Cardiac septum (tissue), 1 donor: ENCODE measurements at regions of chr4 and their contacts with region 1.

Region 1: GRCh38 chr4:78612398-78613178 is 61.0 kb downstream of the ANXA3 start:
- DNase-seq: no peak

Region 2: DNA sequence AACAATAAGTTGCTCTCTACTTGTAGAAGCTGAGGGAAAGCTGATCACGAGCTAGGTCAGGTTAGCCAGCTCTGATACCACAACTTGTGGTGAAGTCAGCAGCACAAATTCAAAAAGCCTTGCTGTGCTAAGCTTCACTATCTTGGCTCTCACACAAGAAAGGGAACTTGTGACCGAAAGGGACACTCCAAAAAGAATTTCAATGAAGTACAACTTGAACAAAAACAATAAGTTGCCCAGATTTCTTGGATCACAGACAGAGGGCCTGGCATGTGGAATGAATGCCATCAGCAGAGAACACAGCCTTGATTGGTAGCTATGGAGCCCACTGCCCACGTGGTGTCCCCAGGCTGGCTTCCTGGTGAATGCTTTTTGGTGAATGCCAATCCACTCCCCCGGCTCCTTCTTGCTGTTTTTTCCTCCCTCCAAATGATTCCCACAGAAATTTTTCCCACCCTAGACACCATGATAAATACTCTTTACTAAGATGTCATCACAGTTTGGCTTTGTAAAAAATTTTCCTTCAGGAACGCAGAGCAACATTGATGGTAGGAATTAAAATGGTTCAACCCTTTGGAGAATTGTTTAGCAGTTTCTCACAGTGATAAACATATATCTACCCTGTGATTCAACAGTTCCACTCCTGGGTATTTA is 21.6 kb after region 1 on chr4:
- intact Hi-C with region 1: loop called (anchors 2 kb)
- DNase-seq: no peak

Region 3: DNA sequence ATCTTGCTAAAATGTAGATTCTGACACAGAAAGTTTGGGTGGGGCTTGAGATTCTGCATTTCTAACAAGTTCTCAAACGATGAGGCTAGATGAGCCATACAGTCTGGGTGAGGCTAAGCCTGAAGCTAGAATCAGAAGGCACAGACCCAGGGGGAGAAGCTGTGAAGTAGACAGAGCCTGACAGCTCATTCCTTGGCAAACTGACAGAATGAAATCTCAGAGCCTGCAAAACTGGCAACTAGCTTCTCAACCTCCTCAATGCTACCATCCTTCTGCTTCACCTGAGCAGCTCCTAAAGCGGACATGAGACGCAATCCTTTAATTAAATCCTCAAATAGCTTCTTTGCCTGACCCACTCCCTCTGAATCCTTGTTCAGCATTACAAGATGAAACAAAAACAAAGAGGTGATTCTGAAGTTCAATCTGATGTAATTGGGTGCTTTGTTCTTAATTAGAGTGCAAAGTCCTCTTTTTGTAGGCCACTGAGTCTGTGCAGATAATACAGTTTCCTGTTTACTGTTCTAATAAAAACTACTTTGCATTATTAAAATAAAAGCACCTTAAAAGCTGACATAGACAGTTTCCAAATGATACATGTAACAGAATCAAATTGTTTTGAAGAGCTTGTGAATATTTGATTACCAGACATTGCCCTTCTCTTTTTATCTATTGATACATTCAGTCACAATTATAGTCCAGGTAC is 92.5 kb after region 1 on chr4:
- intact Hi-C with region 1: no loop called
- DNase-seq: no peak

Region 4: DNA sequence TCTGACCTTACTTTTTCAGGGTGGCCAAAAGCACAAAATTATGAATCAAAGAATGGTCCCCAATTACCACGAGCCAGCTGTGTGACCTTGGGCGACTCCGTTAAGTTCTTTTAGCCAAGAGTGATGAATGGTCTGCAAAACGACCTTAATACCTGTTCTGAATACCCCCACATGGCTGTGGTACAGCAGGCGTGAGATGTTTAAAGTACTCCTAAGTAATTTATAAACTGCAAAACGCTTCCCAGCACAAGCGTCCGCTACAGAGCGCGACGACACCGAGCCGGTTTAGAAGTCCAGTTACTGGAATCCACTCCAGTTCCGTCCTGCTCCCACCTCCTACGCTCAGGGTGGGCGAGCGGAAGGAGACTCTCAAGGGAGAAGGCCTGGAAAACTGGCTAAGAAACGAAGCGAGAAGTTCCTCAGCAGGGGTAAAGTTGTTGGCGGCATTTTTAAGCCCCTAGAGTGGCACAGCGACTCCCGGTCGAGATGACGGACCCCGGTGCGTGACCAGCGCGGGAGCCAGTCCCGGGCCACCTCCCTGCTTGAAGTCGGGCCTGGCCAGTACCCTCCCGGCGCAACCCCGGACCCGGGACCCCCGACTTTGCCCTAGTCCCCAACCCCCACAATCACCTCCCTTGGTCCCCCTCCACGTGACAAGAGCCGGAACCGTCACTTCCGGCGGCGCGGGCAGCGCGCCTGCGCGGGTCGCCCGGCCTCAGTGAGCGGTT is 162.9 kb after region 1 on chr4:
- intact Hi-C with region 1: loop called (anchors 5 kb)
- DNase-seq: peak; percentile 94

Region 5: GRCh38 chr4:78864405-78865024 is 251.9 kb after region 1 on chr4:
- intact Hi-C with region 1: loop called (anchors 1 kb)
- DNase-seq: no peak